CD4-positive, alpha-beta T cell (primary cell): ENCODE measurements at regions of chr10 and their contacts with region 1.

Region 1: GRCh38 chr10:73785221-73785720 is at the start of gene ZSWIM8:
- DNase-seq: peak; percentile 69 to 95 (median 82)
- ATAC-seq: peak; percentile 83
- H3K4me3 ChIP-seq: peak within 1 kb of the TSS; percentile 94
- H3K4me3 Mint-ChIP-seq: peak within 1 kb of the TSS; percentile 98
- H3K27ac ChIP-seq: peak within 1 kb of the TSS; percentile 80
- H3K27ac Mint-ChIP-seq: peak within 1 kb of the TSS; percentile 96
- H3K4me1 ChIP-seq: peaks cover 38% of the 10 kb centered on the region
- H3K4me1 Mint-ChIP-seq: peaks cover 61% of the 10 kb centered on the region
- H3K27me3 ChIP-seq: no peaks in the 10 kb centered on the region
- H3K27me3 Mint-ChIP-seq: no peaks in the 10 kb centered on the region
- CTCF ChIP-seq: no peak
- total RNA-seq, gene ZSWIM8: 66.4 to 70.7 TPM

Region 2: GRCh38 chr10:73730153-73730906 is 54.9 kb before region 1 on chr10:
- CTCF ChIA-PET with region 1: no interaction called
- POLR2A ChIA-PET with region 1: interaction called, 7 read pairs
- intact Hi-C with region 1: loop called in 1 of 2 experiments (anchors 1 kb)
- DNase-seq: peak; percentile 78 to 94 (median 90)
- ATAC-seq: peak; percentile 90
- H3K4me3 ChIP-seq: peak overlapping the region; percentile 87
- H3K4me3 Mint-ChIP-seq: peak overlapping the region; percentile 98
- H3K27ac ChIP-seq: peak overlapping the region; percentile 77 to 86
- H3K27ac Mint-ChIP-seq: peak overlapping the region; percentile 94
- H3K4me1 ChIP-seq: peaks cover 27% of the 10 kb centered on the region
- H3K4me1 Mint-ChIP-seq: peaks cover 31% of the 10 kb centered on the region
- H3K27me3 ChIP-seq: no peaks in the 10 kb centered on the region
- H3K27me3 Mint-ChIP-seq: no peaks in the 10 kb centered on the region
- CTCF ChIP-seq: no peak

Region 3: DNA sequence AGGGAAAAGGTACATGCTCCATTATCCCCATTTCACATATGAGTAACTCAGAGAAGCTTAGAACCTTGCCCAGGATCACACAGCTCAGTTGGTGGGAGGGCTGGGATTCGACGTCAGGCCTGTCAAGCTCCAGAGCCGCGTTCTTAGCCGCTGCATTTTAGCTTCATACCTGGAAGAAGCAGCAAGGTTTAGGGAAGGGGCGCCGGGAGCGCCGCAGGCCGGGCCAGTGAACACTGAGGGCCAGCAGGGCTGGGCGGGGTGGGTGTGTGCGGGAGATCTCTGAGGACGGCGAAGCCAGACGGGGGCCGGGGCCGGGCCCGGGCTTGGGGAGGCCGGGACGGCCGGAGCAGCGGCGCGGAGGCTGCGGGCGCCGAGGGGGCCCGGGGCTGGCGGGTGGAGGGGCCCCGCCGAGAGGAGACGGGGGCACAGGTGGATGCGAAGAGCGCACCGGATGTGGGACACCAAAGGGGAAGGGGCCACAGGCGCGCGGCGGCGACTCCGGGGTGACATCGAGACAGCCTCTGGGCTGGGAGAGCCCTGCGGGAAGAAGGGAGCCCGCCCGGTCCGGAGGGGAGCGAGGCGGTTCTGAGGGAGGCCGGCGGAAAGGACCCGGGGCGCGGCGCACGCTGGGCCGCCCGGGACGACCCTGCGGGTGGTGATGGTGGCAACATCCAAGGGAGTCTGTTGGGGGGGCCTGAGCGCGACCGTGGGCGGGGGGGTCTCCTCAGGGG is 25.6 kb after region 1 on chr10:
- CTCF ChIA-PET with region 1: interaction called, 11 read pairs
- POLR2A ChIA-PET with region 1: interaction called, 88 read pairs
- intact Hi-C with region 1: loop called in 1 of 2 experiments (anchors 1 kb)
- DNase-seq: peak in 13 of 14 experiments; percentile 40 to 80 (median 65)
- ATAC-seq: peak; percentile 17
- H3K4me3 ChIP-seq: peak overlapping the region; percentile 70
- H3K4me3 Mint-ChIP-seq: peak overlapping the region; percentile 97
- H3K27ac ChIP-seq: peak overlapping the region; percentile 55 to 91
- H3K27ac Mint-ChIP-seq: peak overlapping the region; percentile 99
- H3K4me1 ChIP-seq: peaks cover 53% of the 10 kb centered on the region
- H3K4me1 Mint-ChIP-seq: peaks cover 52% of the 10 kb centered on the region
- H3K27me3 ChIP-seq: no peaks in the 10 kb centered on the region
- H3K27me3 Mint-ChIP-seq: no peaks in the 10 kb centered on the region
- CTCF ChIP-seq: no peak

Region 4: GRCh38 chr10:73827346-73828089 is 42.2 kb after region 1 on chr10:
- CTCF ChIA-PET with region 1: no interaction called
- POLR2A ChIA-PET with region 1: no interaction called
- intact Hi-C with region 1: no loop called
- DNase-seq: no peak
- ATAC-seq: no peak
- H3K4me3 ChIP-seq: no peak overlapping the region
- H3K4me3 Mint-ChIP-seq: no peak overlapping the region
- H3K27ac ChIP-seq: no peak overlapping the region
- H3K27ac Mint-ChIP-seq: no peak overlapping the region
- H3K4me1 ChIP-seq: no peaks in the 10 kb centered on the region
- H3K4me1 Mint-ChIP-seq: no peaks in the 10 kb centered on the region
- H3K27me3 ChIP-seq: no peaks in the 10 kb centered on the region
- H3K27me3 Mint-ChIP-seq: no peaks in the 10 kb centered on the region
- CTCF ChIP-seq: no peak